ENCODE measurements at regions of chr10 and their contacts with region 1.

Region 1: DNA sequence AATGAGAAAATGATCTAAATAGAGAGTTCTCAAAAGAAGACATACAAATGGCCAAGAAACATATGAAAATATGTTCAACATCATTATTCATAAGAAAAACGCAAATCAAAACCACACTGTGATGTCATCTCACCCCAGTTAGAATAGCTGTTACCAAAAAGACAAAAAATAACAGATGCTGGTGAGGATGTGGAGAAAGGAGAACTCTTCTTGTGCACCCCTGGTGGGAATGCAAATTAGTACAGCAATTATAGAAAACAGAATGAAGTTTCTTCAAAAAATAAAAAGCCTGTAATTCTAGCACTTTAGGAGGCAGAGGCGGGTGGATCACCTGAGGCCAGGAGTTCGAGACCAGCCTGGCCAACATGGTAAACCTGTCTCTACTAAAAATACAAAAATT is 199.3 kb downstream of the PARD3 start:
- DNase-seq: no peak
- ATAC-seq: peak; percentile 84
- H3K4me3 ChIP-seq: no peak overlapping the region
- H3K27ac ChIP-seq: no peak overlapping the region
- H3K4me1 ChIP-seq: no peaks in the 10 kb centered on the region
- H3K27me3 ChIP-seq: no peaks in the 10 kb centered on the region
- CTCF ChIP-seq: no peak
- EP300 ChIP-seq: 0 out of 4 replicates have a peak, but pooled peaks of 1 of the 2 experiments have one; percentile 20
- POLR2A ChIP-seq: no peak
- RAD21 ChIP-seq: no peak

Region 2: DNA sequence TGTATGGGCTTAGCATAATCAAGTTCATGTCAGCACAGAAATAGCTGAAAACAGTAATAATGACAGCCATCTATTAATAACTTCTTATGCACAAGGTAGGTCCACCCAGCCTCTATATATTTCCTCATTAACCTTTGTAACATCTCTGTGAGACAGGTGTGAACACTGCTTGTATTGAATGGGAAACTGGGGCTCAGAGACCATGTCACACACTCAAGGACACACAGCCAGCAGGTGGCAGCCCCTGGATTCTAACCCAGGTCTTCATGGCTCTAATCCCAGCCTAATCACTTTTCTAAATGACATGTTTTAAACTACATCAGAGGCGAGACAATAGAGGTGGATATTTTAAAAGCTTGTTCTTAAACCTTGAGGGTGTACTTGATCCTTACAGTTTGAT is 392.1 kb before region 1 on chr10:
- CTCF ChIA-PET with region 1: no interaction called
- POLR2A ChIA-PET with region 1: no interaction called
- RAD21 ChIA-PET with region 1: no interaction called
- SMC1A ChIA-PET with region 1: no interaction called
- in situ Hi-C with region 1: no loop called
- intact Hi-C with region 1: no loop called
- DNase-seq: no peak
- ATAC-seq: peak; percentile 53
- H3K4me3 ChIP-seq: no peak overlapping the region
- H3K27ac ChIP-seq: no peak overlapping the region
- H3K4me1 ChIP-seq: no peaks in the 10 kb centered on the region
- H3K27me3 ChIP-seq: no peaks in the 10 kb centered on the region; a peak in 1 of 4 replicates
- CTCF ChIP-seq: no peak; a peak in 1 of 6 replicates
- EP300 ChIP-seq: no peak
- POLR2A ChIP-seq: no peak
- RAD21 ChIP-seq: no peak

Region 3: GRCh38 chr10:34364253-34365037 is 251.3 kb before region 1 on chr10:
- CTCF ChIA-PET with region 1: no interaction called
- POLR2A ChIA-PET with region 1: no interaction called
- RAD21 ChIA-PET with region 1: no interaction called
- SMC1A ChIA-PET with region 1: no interaction called
- in situ Hi-C with region 1: no loop called
- intact Hi-C with region 1: no loop called
- DNase-seq: no peak
- ATAC-seq: no peak
- H3K4me3 ChIP-seq: no peak overlapping the region
- H3K27ac ChIP-seq: no peak overlapping the region
- H3K4me1 ChIP-seq: no peaks in the 10 kb centered on the region
- H3K27me3 ChIP-seq: no peaks in the 10 kb centered on the region
- CTCF ChIP-seq: no peak
- EP300 ChIP-seq: no peak
- POLR2A ChIP-seq: no peak
- RAD21 ChIP-seq: no peak

Region 4: DNA sequence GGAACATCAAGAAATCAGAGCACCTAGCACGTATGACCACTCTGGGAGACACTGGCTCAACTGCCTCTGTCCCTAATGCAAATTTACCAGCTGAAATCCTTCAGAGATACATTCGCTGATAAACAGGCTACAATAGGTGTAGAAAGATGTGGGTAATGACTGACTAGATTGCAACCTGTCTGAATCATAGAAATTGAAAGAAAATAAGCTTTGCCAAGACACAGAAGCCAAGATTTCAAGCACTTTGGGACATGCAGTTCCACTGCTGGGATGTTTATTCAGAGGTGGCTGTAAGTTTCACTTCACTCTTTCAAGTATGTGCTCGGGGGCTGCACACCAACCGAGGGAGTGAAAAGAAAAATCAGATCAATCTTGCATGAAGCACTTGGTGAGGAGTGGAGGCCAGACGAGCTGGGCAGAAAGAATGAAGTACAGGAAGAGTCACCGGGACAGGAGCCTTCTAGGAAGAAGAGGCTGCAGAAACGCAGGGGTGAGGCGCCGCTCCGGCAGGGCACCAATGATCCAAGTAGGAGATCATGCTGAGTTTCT is 77.4 kb before region 1 on chr10:
- CTCF ChIA-PET with region 1: interaction called, 6 read pairs
- POLR2A ChIA-PET with region 1: interaction called, 5 read pairs
- RAD21 ChIA-PET with region 1: interaction called, 22 read pairs
- SMC1A ChIA-PET with region 1: interaction called, 4 read pairs
- in situ Hi-C with region 1: no loop called
- intact Hi-C with region 1: no loop called
- DNase-seq: peak; percentile 57
- ATAC-seq: peak; percentile 77
- H3K4me3 ChIP-seq: peak overlapping the region; percentile 31; the same call in 1 of the 2 replicates
- H3K27ac ChIP-seq: peak overlapping the region; percentile 39
- H3K4me1 ChIP-seq: peaks cover 18% of the 10 kb centered on the region
- H3K27me3 ChIP-seq: no peaks in the 10 kb centered on the region
- CTCF ChIP-seq: no peak
- EP300 ChIP-seq: no peak
- POLR2A ChIP-seq: no peak
- RAD21 ChIP-seq: no peak

Region 5: DNA sequence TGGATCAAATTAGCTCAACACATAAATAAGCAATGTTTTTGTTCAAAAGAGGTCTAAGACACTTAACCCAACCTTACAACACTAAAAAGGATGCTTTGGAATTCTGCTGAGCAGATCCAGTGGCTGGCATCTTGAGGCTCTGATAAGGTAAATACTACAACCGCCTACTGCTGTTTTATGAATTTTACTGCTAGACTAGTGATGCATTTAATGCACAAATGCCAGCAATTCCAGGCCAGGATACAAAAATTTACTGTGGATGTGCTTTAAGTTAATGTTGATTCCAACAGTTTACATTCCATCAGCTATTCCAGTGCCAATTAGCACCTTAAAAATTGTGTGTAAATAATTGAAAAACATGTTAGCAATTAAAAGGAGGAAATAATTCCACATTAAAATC is 62.0 kb before region 1 on chr10:
- CTCF ChIA-PET with region 1: no interaction called
- POLR2A ChIA-PET with region 1: no interaction called
- RAD21 ChIA-PET with region 1: no interaction called
- SMC1A ChIA-PET with region 1: interaction called, 10 read pairs
- in situ Hi-C with region 1: no loop called
- intact Hi-C with region 1: no loop called
- DNase-seq: no peak
- ATAC-seq: no peak
- H3K4me3 ChIP-seq: no peak overlapping the region
- H3K27ac ChIP-seq: no peak overlapping the region
- H3K4me1 ChIP-seq: no peaks in the 10 kb centered on the region
- H3K27me3 ChIP-seq: 0 out of 4 replicates have a peak, but pooled peaks cover 0 to under 1% of the 10 kb centered on the region in 2 experiments
- CTCF ChIP-seq: no peak
- EP300 ChIP-seq: no peak
- POLR2A ChIP-seq: no peak
- RAD21 ChIP-seq: no peak

Region 6: DNA sequence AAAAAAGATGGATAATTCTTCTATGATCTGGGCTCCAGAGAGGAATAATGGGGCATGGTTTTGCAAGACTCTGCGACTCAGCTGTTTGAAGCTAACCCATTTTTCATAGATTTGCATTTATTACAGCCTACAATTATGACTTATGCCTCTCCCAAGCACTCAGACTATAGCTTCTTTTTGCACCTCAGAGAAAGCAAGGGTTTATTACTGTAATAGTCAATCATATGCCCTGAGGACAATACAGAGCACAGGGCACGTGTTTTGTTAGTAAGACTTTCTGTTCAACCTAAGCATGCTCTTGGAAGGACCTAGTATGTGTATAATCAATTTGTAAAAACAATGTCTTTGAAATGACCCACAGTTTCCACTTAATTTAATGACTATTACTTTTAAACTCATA is 21.8 kb before region 1 on chr10:
- CTCF ChIA-PET with region 1: interaction called, 6 read pairs
- POLR2A ChIA-PET with region 1: no interaction called
- RAD21 ChIA-PET with region 1: interaction called, 6 read pairs
- SMC1A ChIA-PET with region 1: interaction called, 17 read pairs
- in situ Hi-C with region 1: no loop called
- intact Hi-C with region 1: no loop called
- DNase-seq: no peak
- ATAC-seq: no peak
- H3K4me3 ChIP-seq: no peak overlapping the region
- H3K27ac ChIP-seq: no peak overlapping the region
- H3K4me1 ChIP-seq: no peaks in the 10 kb centered on the region
- H3K27me3 ChIP-seq: no peaks in the 10 kb centered on the region
- CTCF ChIP-seq: no peak
- EP300 ChIP-seq: no peak
- POLR2A ChIP-seq: no peak
- RAD21 ChIP-seq: no peak

Region 7: DNA sequence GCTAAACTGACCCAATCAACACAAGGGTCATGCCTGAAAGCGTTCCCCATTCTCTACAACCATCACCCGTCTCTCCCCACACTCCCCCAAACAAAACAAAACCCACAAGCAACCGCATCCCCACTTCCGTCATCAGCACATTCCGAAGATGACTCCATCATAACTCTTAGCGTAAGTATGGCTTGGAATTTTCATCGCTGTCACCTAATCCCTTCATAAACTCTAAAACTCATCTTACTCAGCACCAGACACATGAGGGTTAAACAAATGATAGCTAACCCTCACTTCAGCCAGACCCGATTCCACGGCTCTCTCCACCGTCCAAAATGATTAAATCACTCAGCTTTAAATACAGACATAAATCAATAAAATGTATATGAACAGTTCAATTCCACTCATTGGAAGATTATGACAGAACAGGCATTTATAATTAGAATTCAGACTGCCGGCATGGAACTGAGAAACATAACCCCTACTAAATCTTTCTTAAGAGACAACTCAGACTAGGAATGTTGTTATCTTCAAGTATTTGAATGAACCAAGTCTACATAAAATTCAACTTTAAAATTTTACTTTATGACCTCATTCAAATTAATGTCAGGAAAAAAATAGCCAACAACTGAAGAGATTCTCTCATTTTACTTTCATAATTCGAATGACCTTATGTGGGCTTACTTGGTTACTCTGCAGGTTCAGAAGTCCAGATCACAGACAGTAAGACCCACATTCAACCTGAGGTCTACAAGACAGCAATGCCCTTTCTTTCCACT is 16.6 kb before region 1 on chr10:
- CTCF ChIA-PET with region 1: interaction called, 6 read pairs
- POLR2A ChIA-PET with region 1: no interaction called
- RAD21 ChIA-PET with region 1: interaction called, 6 read pairs
- SMC1A ChIA-PET with region 1: interaction called, 17 read pairs
- in situ Hi-C with region 1: no loop called
- intact Hi-C with region 1: no loop called
- DNase-seq: no peak
- ATAC-seq: peak; percentile 31; the same call in 2 of the 3 replicates
- H3K4me3 ChIP-seq: no peak overlapping the region
- H3K27ac ChIP-seq: no peak overlapping the region
- H3K4me1 ChIP-seq: no peaks in the 10 kb centered on the region
- H3K27me3 ChIP-seq: no peaks in the 10 kb centered on the region
- CTCF ChIP-seq: no peak
- EP300 ChIP-seq: no peak
- POLR2A ChIP-seq: no peak
- RAD21 ChIP-seq: no peak

Region 8: DNA sequence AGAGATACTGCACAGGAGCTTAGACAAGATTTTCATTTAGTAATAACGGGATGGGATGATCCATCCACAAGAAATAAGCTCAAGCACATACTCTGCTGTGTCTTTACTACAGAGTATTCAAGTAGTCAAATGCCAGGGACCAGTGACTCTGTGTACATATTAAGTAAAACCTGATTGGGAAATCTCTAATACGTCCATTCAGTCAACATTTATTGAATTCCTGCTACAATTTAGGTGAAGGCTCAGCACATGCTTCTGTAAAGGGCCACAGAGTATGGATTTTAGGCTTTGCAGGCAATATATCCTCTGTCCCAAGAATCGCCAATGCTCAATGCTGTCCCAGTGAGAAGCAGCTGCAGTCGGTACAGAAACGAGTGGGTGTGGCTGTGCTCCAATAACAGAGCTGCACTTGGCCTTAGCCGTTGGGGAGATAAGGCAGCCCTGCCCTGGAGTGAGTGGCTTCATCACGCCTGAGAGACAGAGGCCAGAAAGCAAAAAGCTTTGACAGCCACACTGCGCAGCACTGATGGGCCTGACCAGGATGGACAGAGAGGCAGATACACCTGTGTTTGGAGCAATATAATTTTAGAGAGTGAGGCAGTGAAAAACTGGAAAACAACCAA is 12.5 kb after region 1 on chr10:
- CTCF ChIA-PET with region 1: interaction called, 12 read pairs
- POLR2A ChIA-PET with region 1: interaction called, 9 read pairs
- RAD21 ChIA-PET with region 1: interaction called, 6 read pairs
- SMC1A ChIA-PET with region 1: interaction called, 23 read pairs
- in situ Hi-C with region 1: no loop called
- intact Hi-C with region 1: no loop called
- DNase-seq: no peak
- ATAC-seq: peak; percentile 10; the same call in 1 of the 3 replicates
- H3K4me3 ChIP-seq: no peak overlapping the region
- H3K27ac ChIP-seq: no peak overlapping the region
- H3K4me1 ChIP-seq: no peaks in the 10 kb centered on the region
- H3K27me3 ChIP-seq: no peaks in the 10 kb centered on the region
- CTCF ChIP-seq: no peak
- EP300 ChIP-seq: no peak
- POLR2A ChIP-seq: no peak
- RAD21 ChIP-seq: no peak

Region 9: GRCh38 chr10:34861293-34862021 is 245.7 kb after region 1 on chr10:
- CTCF ChIA-PET with region 1: no interaction called
- POLR2A ChIA-PET with region 1: no interaction called
- RAD21 ChIA-PET with region 1: no interaction called
- SMC1A ChIA-PET with region 1: no interaction called
- in situ Hi-C with region 1: no loop called
- intact Hi-C with region 1: no loop called
- DNase-seq: no peak
- ATAC-seq: no peak
- H3K4me3 ChIP-seq: no peak overlapping the region
- H3K27ac ChIP-seq: no peak overlapping the region
- H3K4me1 ChIP-seq: no peaks in the 10 kb centered on the region
- H3K27me3 ChIP-seq: no peaks in the 10 kb centered on the region
- CTCF ChIP-seq: no peak
- EP300 ChIP-seq: no peak
- POLR2A ChIP-seq: no peak
- RAD21 ChIP-seq: no peak